CD4-positive, alpha-beta T cell (primary cell): ENCODE measurements at regions of chr1 and their contacts with region 1.

Region 1: DNA sequence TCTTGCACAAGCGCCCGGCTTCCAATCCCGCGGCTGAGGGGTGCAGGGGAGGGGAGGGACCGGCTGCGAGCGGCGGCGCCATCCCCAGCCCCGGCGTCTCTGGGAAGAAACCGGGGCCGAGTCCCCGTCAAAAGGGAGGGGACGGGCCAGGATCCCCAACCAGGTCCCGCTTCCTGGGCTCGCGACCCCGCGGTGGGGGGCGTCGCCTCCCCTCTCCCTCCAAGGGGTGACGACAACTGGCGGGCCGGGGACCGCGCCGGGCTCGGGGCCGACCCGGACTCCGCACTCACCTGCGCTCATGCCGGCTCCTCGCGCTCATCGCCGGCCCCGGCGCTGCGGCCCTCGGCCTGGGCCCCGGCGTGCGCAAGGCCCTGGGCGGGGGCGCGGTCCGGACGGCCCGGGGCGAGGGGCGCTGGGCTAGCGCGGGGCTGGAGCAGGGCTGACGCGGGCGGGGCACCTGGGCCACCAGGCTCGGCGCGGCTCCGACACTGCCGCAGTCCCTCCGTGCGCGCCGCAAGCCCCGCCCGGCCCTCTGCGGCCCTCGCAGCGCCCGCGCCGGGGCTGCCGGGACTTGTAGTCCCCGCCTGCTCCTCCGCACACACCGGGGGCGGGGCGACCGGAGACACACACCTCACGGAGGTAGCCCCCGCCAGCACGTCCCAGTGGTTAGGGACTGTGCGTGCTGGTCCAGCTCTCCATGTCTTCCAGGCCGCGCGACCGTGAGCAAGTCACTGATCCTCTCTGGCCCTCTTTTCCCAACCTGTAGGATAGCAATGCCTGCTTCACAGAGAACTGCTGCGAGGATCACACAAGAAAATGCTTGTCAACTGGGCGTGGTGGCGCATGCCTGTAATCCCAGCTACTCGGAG is at the start of gene ATP13A2:
- DNase-seq: peak; percentile 64 to 94 (median 80)
- ATAC-seq: peak; percentile 99
- H3K4me3 ChIP-seq: peak within 1 kb of the TSS; percentile 73
- H3K4me3 Mint-ChIP-seq: peak within 1 kb of the TSS; percentile 90
- H3K27ac ChIP-seq: no peak within 1 kb of the TSS
- H3K27ac Mint-ChIP-seq: peak within 1 kb of the TSS; percentile 73
- H3K4me1 ChIP-seq: peaks cover 35% of the 10 kb centered on the region
- H3K4me1 Mint-ChIP-seq: peaks cover 16% of the 10 kb centered on the region
- H3K27me3 ChIP-seq: no peaks in the 10 kb centered on the region
- H3K27me3 Mint-ChIP-seq: no peaks in the 10 kb centered on the region
- CTCF ChIP-seq: no peak
- total RNA-seq, gene ATP13A2: 27.0 to 30.6 TPM

Region 2: DNA sequence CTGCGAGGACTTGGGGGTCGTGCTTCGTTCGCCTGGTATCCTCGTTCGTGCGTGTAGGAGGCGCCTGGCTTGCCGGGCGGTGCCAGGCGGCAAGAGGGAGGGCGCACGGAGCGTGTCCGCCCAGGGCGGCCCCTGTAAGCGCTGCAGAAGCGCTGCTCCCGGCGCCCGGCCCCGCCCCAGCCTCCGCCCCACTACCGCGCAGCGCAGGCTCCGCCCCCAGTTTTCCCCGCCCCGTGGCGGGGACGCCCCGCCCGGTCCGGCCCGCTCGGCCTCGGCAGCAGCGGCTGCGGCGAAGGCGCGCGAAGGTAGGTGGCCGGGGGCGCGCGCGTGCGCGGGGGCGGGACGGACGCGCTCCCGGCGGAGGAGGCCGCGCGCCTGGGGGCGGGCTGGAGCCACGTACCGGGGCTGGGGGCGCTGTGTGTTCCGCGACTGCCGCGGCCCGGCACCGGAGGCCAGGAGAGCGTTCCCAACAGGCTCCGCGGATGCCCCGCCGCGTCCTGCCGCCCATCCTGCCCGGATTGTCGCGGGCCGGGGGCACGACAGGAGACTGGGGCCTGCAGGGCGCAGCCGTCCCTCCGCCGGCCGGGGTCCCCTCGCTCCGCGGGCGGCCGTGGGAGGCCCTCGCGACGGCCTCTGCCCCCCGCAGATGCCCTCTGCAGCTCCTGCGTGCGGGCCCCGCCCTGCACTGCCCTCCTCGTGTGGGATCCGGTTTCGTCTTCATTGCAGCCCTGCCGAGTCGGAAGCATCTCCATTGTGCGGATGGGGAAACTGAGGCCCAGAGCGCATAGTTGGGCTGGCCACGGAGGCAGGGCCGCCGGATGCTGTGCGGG is 97.6 kb before region 1 on chr1:
- CTCF ChIA-PET with region 1: no interaction called
- POLR2A ChIA-PET with region 1: no interaction called
- intact Hi-C with region 1: loop called in 1 of 2 experiments (anchors 5 kb)
- DNase-seq: peak; percentile 80 to 100 (median 96)
- ATAC-seq: peak; percentile 93
- H3K4me3 ChIP-seq: peak overlapping the region; percentile 67
- H3K4me3 Mint-ChIP-seq: peak overlapping the region; percentile 93
- H3K27ac ChIP-seq: peak overlapping the region in 1 of 2 donors; percentile 46
- H3K27ac Mint-ChIP-seq: peak overlapping the region; percentile 79
- H3K4me1 ChIP-seq: peaks cover 37% of the 10 kb centered on the region
- H3K4me1 Mint-ChIP-seq: peaks cover 42% of the 10 kb centered on the region
- H3K27me3 ChIP-seq: no peaks in the 10 kb centered on the region
- H3K27me3 Mint-ChIP-seq: no peaks in the 10 kb centered on the region
- CTCF ChIP-seq: no peak

Region 3: DNA sequence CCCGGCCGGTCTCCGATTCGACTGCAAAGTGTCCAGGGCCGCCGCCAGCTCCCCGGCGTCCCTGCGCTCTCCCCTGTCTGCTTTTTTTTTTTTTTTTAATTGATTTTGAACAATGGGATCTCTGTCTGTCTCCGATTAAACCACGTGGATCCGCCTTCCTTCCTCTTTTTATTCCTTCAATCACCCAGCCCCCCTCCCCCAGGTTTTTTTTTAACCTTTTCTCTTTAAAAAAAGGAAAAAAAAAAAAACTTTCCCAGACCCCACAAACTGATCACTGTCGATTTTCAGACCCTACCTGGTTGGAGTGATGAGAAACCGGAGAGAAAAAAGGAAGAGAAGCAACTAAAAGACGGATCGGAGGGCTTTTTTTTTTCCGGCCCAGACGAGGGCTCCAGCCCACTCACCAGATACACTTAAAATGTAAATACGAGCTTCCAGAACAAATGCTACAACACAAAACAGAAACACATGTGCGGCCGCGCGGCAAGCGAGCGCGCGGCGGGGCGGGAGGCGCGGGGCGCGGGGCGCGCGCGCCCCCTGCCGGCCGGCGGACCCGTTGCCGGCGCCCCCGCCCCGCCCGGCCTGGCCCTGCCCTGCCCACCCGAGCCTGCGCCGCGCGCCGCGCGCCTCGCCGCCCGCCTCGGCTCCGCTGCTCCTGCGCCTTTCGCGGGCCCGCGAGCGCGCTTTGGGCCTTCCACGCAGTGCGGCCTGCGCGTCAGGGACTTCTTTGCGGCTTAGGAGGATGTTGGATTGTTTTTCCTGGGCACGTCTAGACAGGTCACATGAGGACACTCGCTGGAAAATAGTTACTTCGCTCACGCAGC is 427.8 kb after region 1 on chr1 and contains the start of gene RCC2:
- CTCF ChIA-PET with region 1: no interaction called
- POLR2A ChIA-PET with region 1: no interaction called
- intact Hi-C with region 1: loop called in 1 of 2 experiments (anchors 5 kb)
- DNase-seq: peak; percentile 51 to 92 (median 68)
- ATAC-seq: peak; percentile 77
- H3K4me3 ChIP-seq: peak within 1 kb of the TSS; percentile 94
- H3K4me3 Mint-ChIP-seq: peak within 1 kb of the TSS; percentile 98
- H3K27ac ChIP-seq: peak within 1 kb of the TSS; percentile 77 to 78
- H3K27ac Mint-ChIP-seq: peak within 1 kb of the TSS; percentile 95
- H3K4me1 ChIP-seq: peaks cover 38% of the 10 kb centered on the region
- H3K4me1 Mint-ChIP-seq: peaks cover 45% of the 10 kb centered on the region
- H3K27me3 ChIP-seq: no peaks in the 10 kb centered on the region
- H3K27me3 Mint-ChIP-seq: no peaks in the 10 kb centered on the region
- CTCF ChIP-seq: no peak
- total RNA-seq, gene RCC2: 20.1 to 21.0 TPM

Region 4: GRCh38 chr1:17540255-17541001 is 528.8 kb after region 1 on chr1:
- CTCF ChIA-PET with region 1: no interaction called
- POLR2A ChIA-PET with region 1: no interaction called
- intact Hi-C with region 1: no loop called
- DNase-seq: no peak
- ATAC-seq: no peak
- H3K4me3 ChIP-seq: no peak overlapping the region
- H3K4me3 Mint-ChIP-seq: no peak overlapping the region
- H3K27ac ChIP-seq: no peak overlapping the region
- H3K27ac Mint-ChIP-seq: no peak overlapping the region
- H3K4me1 ChIP-seq: peaks cover 5% of the 10 kb centered on the region
- H3K4me1 Mint-ChIP-seq: peaks cover 7% of the 10 kb centered on the region
- H3K27me3 ChIP-seq: peaks cover 36 to 40% of the 10 kb centered on the region in 2 experiments
- H3K27me3 Mint-ChIP-seq: peaks cover 69% of the 10 kb centered on the region
- CTCF ChIP-seq: no peak